A549 (cell line): ENCODE measurements at regions of chr20 and their contacts with region 1.

Region 1: GRCh38 chr20:41693136-41693979 is 75.2 kb upstream of the CHD6 start:
- DNase-seq: peak; percentile 60 to 94
- ATAC-seq: peak; percentile 93 to 96
- H3K4me3 ChIP-seq: peak overlapping the region; percentile 59
- H3K27ac ChIP-seq: peak overlapping the region; percentile 80 to 96
- H3K4me1 ChIP-seq: peaks cover 4% of the 10 kb centered on the region; the same call in 2 of the 3 replicates
- CTCF ChIP-seq: peak; percentile 70; the same call in 2 of the 3 replicates
- EP300 ChIP-seq: no peak
- POLR2A ChIP-seq: peak; percentile 80
- RAD21 ChIP-seq: no peak

Region 2: DNA sequence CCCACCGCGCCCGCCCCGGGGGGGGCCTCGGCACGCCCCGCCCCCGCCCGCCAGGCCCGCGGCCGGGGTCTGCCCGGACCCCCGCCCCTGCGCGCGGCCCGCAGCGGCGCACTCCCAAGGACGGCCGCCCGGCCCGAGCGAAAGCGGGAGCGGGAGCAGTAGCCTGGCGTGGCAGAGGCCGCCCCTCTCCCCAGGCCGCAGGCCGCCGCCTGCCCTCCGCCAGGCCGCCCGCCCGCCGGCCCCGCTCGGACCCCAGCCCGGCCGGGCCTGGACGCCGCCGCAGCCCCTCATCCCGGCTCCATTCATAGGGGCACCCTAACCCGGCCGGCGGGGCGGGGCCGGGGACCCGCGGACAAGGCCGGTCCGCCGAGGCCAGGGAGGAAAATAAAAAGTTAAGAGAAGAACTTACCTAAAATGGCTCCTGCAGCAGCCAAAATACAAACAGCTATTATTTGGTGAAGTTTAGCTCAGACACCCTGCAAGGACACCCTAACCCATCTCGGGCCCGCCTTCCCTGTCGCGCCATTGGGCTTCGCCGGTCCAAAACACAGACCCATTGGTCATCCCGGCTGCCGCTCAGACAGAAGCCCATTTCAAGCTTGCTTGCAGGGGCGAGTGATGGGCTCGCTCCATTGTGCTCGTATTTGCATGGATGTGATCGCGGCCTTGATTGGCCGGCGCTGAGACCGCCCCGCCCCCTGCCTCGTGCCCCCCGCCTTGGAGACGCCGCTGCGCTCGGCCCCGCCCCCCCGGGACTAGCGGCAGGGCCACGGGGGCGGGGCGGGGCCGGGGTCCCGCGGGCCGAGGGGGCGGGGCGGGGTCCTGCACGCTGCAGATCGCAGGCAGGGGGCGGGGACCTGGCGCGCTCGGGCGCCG is 75.2 kb before region 1 on chr20 and contains the start of gene CHD6:
- CTCF ChIA-PET with region 1: interaction called, 3 read pairs
- POLR2A ChIA-PET with region 1: interaction called, 23 read pairs
- DNase-seq: peak; percentile 96 to 99
- ATAC-seq: peak; percentile 98 to 100
- H3K4me3 ChIP-seq: peak within 1 kb of the TSS; percentile 98
- H3K27ac ChIP-seq: peak within 1 kb of the TSS; percentile 94 to 96
- H3K4me1 ChIP-seq: peaks cover 19% of the 10 kb centered on the region
- CTCF ChIP-seq: no peak
- EP300 ChIP-seq: no peak
- POLR2A ChIP-seq: no peak
- RAD21 ChIP-seq: no peak
- polyA plus RNA-seq, gene CHD6: 20.7 and 22.6 TPM in 2 replicates

Region 3: GRCh38 chr20:41670631-41671030 is 22.7 kb before region 1 on chr20:
- CTCF ChIA-PET with region 1: interaction called, 22 read pairs
- POLR2A ChIA-PET with region 1: no interaction called
- DNase-seq: no peak
- ATAC-seq: no peak; a peak in 1 of 6 replicates
- H3K4me3 ChIP-seq: no peak overlapping the region
- H3K27ac ChIP-seq: peak overlapping the region in 1 of 2 experiments; percentile 76; a peak in 2 of 6 replicates
- H3K4me1 ChIP-seq: peaks cover 11% of the 10 kb centered on the region
- CTCF ChIP-seq: no peak
- EP300 ChIP-seq: no peak
- POLR2A ChIP-seq: no peak
- RAD21 ChIP-seq: no peak

Region 4: DNA sequence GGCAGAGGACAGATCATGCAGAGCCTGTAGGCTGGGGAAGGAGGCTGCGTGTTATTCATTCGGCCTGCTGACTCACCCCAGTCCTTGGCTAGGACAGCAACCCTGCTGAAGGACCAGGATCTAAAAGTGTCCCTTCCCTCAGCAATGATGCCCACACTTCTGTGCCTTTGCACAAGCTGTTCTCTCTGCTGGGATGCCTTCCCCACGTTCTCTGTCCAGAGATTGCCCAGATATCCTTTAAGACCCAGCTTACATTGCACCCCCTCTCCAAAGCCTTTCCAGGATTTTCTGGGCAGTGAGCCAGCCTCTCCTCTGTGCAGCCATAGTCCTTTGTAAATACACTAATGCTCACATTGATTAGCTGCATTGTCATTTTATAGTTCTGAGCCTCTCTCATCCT is 24.1 kb after region 1 on chr20:
- CTCF ChIA-PET with region 1: interaction called, 16 read pairs
- POLR2A ChIA-PET with region 1: no interaction called
- DNase-seq: no peak
- ATAC-seq: peak; percentile 65 to 74; a peak in 5 of 6 replicates
- H3K4me3 ChIP-seq: no peak overlapping the region
- H3K27ac ChIP-seq: no peak overlapping the region
- H3K4me1 ChIP-seq: no peaks in the 10 kb centered on the region
- CTCF ChIP-seq: no peak
- EP300 ChIP-seq: no peak
- POLR2A ChIP-seq: no peak
- RAD21 ChIP-seq: no peak

Region 5: GRCh38 chr20:41738604-41739206 is 45.3 kb after region 1 on chr20:
- CTCF ChIA-PET with region 1: interaction called, 15 read pairs
- POLR2A ChIA-PET with region 1: no interaction called
- DNase-seq: peak; percentile 29 to 52
- ATAC-seq: peak; percentile 92 to 95
- H3K4me3 ChIP-seq: no peak overlapping the region
- H3K27ac ChIP-seq: no peak overlapping the region
- H3K4me1 ChIP-seq: no peaks in the 10 kb centered on the region
- CTCF ChIP-seq: peak; percentile 77
- EP300 ChIP-seq: no peak
- POLR2A ChIP-seq: no peak
- RAD21 ChIP-seq: peak; percentile 73 to 84

Region 6: GRCh38 chr20:41776421-41776820 is 83.1 kb after region 1 on chr20:
- CTCF ChIA-PET with region 1: no interaction called
- POLR2A ChIA-PET with region 1: no interaction called
- DNase-seq: no peak
- ATAC-seq: no peak
- H3K4me3 ChIP-seq: no peak overlapping the region
- H3K27ac ChIP-seq: no peak overlapping the region
- H3K4me1 ChIP-seq: no peaks in the 10 kb centered on the region
- CTCF ChIP-seq: no peak
- EP300 ChIP-seq: no peak
- POLR2A ChIP-seq: no peak
- RAD21 ChIP-seq: no peak

Region 7: GRCh38 chr20:43187476-43188233 is 1494.3 kb after region 1 on chr20:
- CTCF ChIA-PET with region 1: interaction called, 10 read pairs
- POLR2A ChIA-PET with region 1: no interaction called
- DNase-seq: peak; percentile 63 to 69
- ATAC-seq: peak; percentile 46 to 78; a peak in 4 of 6 replicates
- H3K4me3 ChIP-seq: no peak overlapping the region
- H3K27ac ChIP-seq: no peak overlapping the region
- H3K4me1 ChIP-seq: no peaks in the 10 kb centered on the region
- CTCF ChIP-seq: peak; percentile 86
- EP300 ChIP-seq: no peak
- POLR2A ChIP-seq: no peak
- RAD21 ChIP-seq: peak; percentile 85 to 87